Heart right ventricle (tissue), 16 donors: ENCODE measurements at regions of chr18 and their contacts with region 1.

Region 1: DNA sequence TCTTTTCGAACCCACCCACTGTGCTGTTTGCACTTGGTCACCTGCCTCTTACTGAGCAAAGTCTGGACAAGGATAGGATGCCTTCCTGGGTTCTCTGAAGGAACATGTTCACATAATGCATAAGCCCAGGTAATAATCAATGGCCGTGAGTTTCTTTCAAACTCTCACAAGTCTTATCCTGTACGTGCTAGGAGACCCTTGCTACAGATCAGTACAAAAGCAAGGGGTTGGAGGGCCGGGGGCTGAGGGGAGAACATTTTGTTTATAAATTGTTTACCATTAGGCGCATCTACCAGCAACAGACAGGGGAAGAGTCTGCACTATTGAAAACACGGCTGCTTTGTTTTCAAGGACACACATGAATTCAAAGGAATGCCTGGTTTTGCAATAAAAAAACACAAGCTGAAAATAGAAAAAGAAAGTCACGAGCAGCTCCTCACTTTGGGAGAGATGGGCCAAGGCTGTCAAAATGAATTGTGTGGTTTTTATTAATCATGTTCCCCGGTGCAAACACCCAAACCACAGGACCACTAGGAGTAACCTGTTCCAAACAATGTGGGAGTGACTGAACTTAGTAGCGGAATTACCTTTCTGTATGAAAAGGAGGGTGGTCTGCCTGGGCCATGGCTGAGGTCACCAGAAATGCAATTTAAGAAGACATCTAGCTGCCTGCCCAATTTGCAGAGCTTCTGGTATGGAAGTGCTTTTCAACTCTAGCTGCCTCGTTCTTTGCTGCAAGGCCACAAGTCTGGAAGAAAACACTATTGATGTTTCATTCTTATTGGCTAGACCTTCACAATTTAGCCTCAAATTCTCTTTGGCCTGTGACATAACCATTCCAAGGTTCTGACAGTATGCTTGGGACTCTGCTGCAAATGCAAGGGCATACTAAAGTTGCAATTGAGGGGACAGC is 73.5 kb downstream of the CCBE1 start:
- DNase-seq: no peak
- ATAC-seq: peak in 6 of 8 donors; percentile 39 to 72 (median 48)
- H3K4me3 ChIP-seq: no peak overlapping the region
- H3K27ac ChIP-seq: peak overlapping the region in 2 of 10 donors; percentile 6 to 48
- H3K4me1 ChIP-seq: peaks cover 0 to 12% (median 5%) of the 10 kb centered on the region in 9 donors
- H3K27me3 ChIP-seq: no peaks in the 10 kb centered on the region
- CTCF ChIP-seq: no peak

Region 2: GRCh38 chr18:59566533-59566971 is 57.2 kb before region 1 on chr18:
- intact Hi-C with region 1: loop called in 1 of 10 experiments (anchors 10 kb)
- DNase-seq: no peak
- ATAC-seq: peak; percentile 25 to 72 (median 46)
- H3K4me3 ChIP-seq: no peak overlapping the region
- H3K27ac ChIP-seq: no peak overlapping the region
- H3K4me1 ChIP-seq: peaks cover 0 to 13% (median 0%) of the 10 kb centered on the region in 9 donors
- H3K27me3 ChIP-seq: no peaks in the 10 kb centered on the region
- CTCF ChIP-seq: no peak